ENCODE measurements at regions of chr11 and their contacts with region 1.

Region 1: GRCh38 chr11:102807921-102808320 is 10.0 kb upstream of the MMP1 start:
- DNase-seq: peak; percentile 15 to 58 (median 21)
- ATAC-seq: peak; percentile 95
- H3K4me3 ChIP-seq: no peak overlapping the region
- H3K27ac ChIP-seq: no peak overlapping the region
- H3K4me1 ChIP-seq: no peaks in the 10 kb centered on the region; a peak in 1 of 5 replicates
- H3K27me3 ChIP-seq: no peaks in the 10 kb centered on the region
- CTCF ChIP-seq: peak; percentile 36 to 50 (median 41)
- EP300 ChIP-seq: no peak
- POLR2A ChIP-seq: no peak
- RAD21 ChIP-seq: no peak

Region 2: DNA sequence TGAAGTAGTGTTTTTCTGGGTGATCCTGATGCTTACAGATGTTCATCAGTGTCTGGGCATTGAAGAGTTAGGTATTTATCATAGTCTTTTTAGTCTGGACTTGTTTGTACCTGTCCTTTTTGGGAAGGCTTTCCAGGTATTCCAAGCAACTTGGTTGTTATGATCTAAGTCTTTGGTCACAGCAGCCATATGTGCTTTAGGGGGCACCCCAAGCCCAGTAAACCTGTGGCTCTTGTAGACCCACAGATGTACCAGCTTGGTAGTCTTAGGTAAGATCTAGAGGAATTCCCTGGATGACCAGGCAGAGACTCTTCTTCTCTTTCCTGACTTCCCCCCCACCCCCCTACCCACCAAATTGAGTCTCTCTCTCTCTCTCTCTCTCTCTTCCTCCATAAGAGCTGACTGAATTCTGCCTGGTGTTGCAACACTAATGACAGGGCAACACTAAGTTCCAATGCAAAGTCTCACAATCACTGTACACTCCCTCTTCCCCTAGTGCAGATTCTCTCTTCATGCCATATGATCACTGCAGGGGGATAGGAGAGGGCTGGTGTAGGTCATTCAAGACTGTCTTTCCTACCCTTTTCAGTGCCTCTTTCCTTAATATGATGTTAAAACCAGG is 58.7 kb before region 1 on chr11:
- CTCF ChIA-PET with region 1: no interaction called
- POLR2A ChIA-PET with region 1: no interaction called
- in situ Hi-C with region 1: no loop called
- intact Hi-C with region 1: no loop called
- DNase-seq: no peak
- ATAC-seq: no peak
- H3K4me3 ChIP-seq: no peak overlapping the region
- H3K27ac ChIP-seq: no peak overlapping the region
- H3K4me1 ChIP-seq: no peaks in the 10 kb centered on the region
- H3K27me3 ChIP-seq: no peaks in the 10 kb centered on the region
- CTCF ChIP-seq: no peak
- EP300 ChIP-seq: no peak
- POLR2A ChIP-seq: no peak
- RAD21 ChIP-seq: no peak

Region 3: GRCh38 chr11:102940714-102941588 is 133.0 kb after region 1 on chr11:
- CTCF ChIA-PET with region 1: no interaction called
- POLR2A ChIA-PET with region 1: no interaction called
- in situ Hi-C with region 1: no loop called
- intact Hi-C with region 1: loop called (anchors 10 kb)
- DNase-seq: peak; percentile 44 to 63 (median 56)
- ATAC-seq: peak; percentile 91
- H3K4me3 ChIP-seq: no peak overlapping the region
- H3K27ac ChIP-seq: no peak overlapping the region
- H3K4me1 ChIP-seq: no peaks in the 10 kb centered on the region
- H3K27me3 ChIP-seq: no peaks in the 10 kb centered on the region
- CTCF ChIP-seq: peak; percentile 58 to 72 (median 70); a peak in 5 of 6 replicates
- EP300 ChIP-seq: no peak
- POLR2A ChIP-seq: no peak
- RAD21 ChIP-seq: peak; percentile 55 to 66

Measured in K562 (cell line).